Naive thymus-derived CD4-positive, alpha-beta T cell (primary cell): ENCODE measurements at regions of chr20 and their contacts with region 1.

Region 1: GRCh38 chr20:354298-355064 is 7.6 kb downstream of the NRSN2 start:
- DNase-seq: peak; percentile 64 to 86 (median 79)
- ATAC-seq: peak; percentile 100
- H3K4me3 ChIP-seq: no peak overlapping the region
- H3K4me3 Mint-ChIP-seq: no peak overlapping the region
- H3K27ac ChIP-seq: no peak overlapping the region
- H3K27ac Mint-ChIP-seq: no peak overlapping the region
- H3K4me1 ChIP-seq: peaks cover 0 to 3% of the 10 kb centered on the region in 2 donors
- H3K4me1 Mint-ChIP-seq: peaks cover 0 to 13% (median 5%) of the 10 kb centered on the region in 7 donors
- H3K27me3 ChIP-seq: no peaks in the 10 kb centered on the region
- H3K27me3 Mint-ChIP-seq: peaks cover 0 to 4% (median 0%) of the 10 kb centered on the region in 5 donors

Region 2: DNA sequence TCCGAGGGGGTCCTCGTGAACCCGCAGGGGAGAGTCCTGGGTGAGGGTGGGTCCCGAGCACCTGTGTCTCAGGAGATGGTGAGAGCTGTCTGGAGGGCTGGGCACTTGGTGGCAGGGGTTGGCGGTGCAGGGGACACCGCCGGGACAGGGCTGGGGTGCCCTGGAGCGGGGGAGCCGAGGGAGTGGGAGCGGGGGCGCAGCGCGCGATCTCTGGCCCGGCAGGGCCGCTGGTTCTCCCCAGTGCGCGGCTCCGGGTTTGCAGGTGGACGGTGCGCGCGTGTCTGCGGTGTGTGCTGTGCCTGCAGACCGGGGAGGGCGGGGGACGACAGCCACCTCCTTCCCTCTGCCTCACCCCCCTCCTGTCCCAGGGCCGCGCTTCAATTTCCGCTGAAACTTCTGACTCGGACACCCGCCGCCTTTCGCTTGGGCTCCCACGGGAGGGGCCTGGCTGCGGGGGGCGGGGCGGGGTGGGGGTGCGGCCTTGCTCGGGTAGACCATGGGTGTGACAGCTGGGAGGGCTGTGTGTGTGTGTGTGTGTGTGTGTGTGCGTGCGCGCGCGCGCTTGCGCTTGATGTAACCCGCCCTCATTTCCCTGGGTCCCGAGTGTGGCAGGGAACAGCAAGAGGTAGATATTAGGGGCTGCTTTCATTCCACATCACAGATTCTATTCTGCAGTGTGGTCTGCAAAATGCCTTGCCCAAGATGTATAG is 27.3 kb after region 1 on chr20:
- CTCF ChIA-PET with region 1: interaction called, 3 read pairs
- POLR2A ChIA-PET with region 1: no interaction called
- intact Hi-C with region 1: loop called in 1 of 2 experiments (anchors 2 kb)
- DNase-seq: peak; percentile 41 to 75 (median 64)
- ATAC-seq: peak; percentile 81
- H3K4me3 ChIP-seq: peak overlapping the region; percentile 64
- H3K4me3 Mint-ChIP-seq: peak overlapping the region; percentile 66 to 91 (median 84)
- H3K27ac ChIP-seq: peak overlapping the region; percentile 73
- H3K27ac Mint-ChIP-seq: peak overlapping the region; percentile 55 to 86 (median 78)
- H3K4me1 ChIP-seq: no peaks in the 10 kb centered on the region
- H3K4me1 Mint-ChIP-seq: peaks cover 4 to 34% (median 13%) of the 10 kb centered on the region in 7 donors
- H3K27me3 ChIP-seq: no peaks in the 10 kb centered on the region
- H3K27me3 Mint-ChIP-seq: peaks cover 0 to 3% (median 0%) of the 10 kb centered on the region in 5 donors

Region 3: GRCh38 chr20:420641-421574 is 66.4 kb after region 1 on chr20:
- CTCF ChIA-PET with region 1: no interaction called
- POLR2A ChIA-PET with region 1: no interaction called
- intact Hi-C with region 1: no loop called
- DNase-seq: no peak
- ATAC-seq: no peak
- H3K4me3 ChIP-seq: no peak overlapping the region
- H3K4me3 Mint-ChIP-seq: no peak overlapping the region
- H3K27ac ChIP-seq: no peak overlapping the region
- H3K27ac Mint-ChIP-seq: peak overlapping the region in 1 of 9 donors; percentile 85
- H3K4me1 ChIP-seq: no peaks in the 10 kb centered on the region
- H3K4me1 Mint-ChIP-seq: peaks cover 11 to 30% (median 16%) of the 10 kb centered on the region in 7 donors
- H3K27me3 ChIP-seq: no peaks in the 10 kb centered on the region
- H3K27me3 Mint-ChIP-seq: no peaks in the 10 kb centered on the region

Region 4: DNA sequence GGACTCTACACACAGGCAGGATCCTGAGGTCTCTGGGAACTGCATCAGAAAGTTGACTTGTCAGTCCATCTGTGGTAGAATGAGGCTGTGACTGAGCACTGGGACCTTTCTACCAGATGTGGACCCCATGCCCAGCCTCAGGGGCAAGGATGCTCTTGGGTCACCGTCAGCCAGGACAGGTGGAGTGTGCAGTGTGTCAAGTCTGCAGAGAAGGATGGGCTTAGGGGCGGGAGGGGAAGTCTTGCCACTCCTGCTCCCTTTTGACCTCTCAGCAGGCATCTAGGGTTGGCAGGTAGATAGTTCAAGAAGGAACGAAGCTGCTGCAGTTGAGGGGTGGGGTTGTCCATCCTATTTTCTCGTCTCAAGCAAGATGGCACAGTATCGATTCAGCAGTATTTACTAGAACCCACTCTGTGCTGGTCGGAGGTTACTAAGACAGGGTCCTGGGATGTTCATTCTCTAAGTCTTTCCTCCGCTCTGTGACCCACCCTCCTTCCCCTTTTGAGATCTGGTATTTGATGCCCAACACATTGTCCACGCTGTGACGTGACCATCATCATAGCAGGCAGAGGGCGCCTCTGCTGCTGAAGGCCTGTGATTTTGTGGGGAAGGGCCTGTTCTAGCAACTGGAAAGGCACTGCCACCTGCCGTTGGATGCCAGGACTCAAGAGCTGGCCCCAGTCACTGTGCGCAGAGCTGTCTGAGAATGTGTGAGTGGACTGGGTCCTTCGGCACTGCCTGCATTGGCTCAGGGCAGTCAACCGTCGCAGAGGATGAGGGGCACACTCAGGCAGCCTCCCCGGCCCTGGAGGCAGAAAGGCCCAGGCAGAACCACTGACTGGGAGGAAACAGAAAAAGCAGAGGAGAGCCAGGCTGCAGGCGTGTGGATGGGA is 76.8 kb after region 1 on chr20:
- CTCF ChIA-PET with region 1: interaction called, 15 read pairs
- POLR2A ChIA-PET with region 1: no interaction called
- intact Hi-C with region 1: loop called (anchors 1 kb)
- DNase-seq: peak in 7 of 9 donors; percentile 25 to 47 (median 29)
- ATAC-seq: peak; percentile 65
- H3K4me3 ChIP-seq: no peak overlapping the region
- H3K4me3 Mint-ChIP-seq: no peak overlapping the region
- H3K27ac ChIP-seq: no peak overlapping the region
- H3K27ac Mint-ChIP-seq: peak overlapping the region in 7 of 9 donors; percentile 17 to 88 (median 72)
- H3K4me1 ChIP-seq: peaks cover 17 to 21% of the 10 kb centered on the region in 2 donors
- H3K4me1 Mint-ChIP-seq: peaks cover 27 to 57% (median 45%) of the 10 kb centered on the region in 7 donors
- H3K27me3 ChIP-seq: no peaks in the 10 kb centered on the region
- H3K27me3 Mint-ChIP-seq: no peaks in the 10 kb centered on the region

Region 5: GRCh38 chr20:462199-462991 is 107.9 kb after region 1 on chr20 and contains the start of gene TBC1D20:
- CTCF ChIA-PET with region 1: interaction called, 3 read pairs
- POLR2A ChIA-PET with region 1: no interaction called
- intact Hi-C with region 1: loop called (anchors 1 to 5 kb)
- DNase-seq: peak; percentile 81 to 92 (median 89)
- ATAC-seq: peak; percentile 99
- H3K4me3 ChIP-seq: peak within 1 kb of the TSS; percentile 71
- H3K4me3 Mint-ChIP-seq: peak within 1 kb of the TSS; percentile 90 to 100 (median 97)
- H3K27ac ChIP-seq: peak within 1 kb of the TSS; percentile 85
- H3K27ac Mint-ChIP-seq: peak within 1 kb of the TSS; percentile 90 to 98 (median 95)
- H3K4me1 ChIP-seq: peaks cover 26 to 33% of the 10 kb centered on the region in 2 donors
- H3K4me1 Mint-ChIP-seq: peaks cover 31 to 55% (median 49%) of the 10 kb centered on the region in 7 donors
- H3K27me3 ChIP-seq: no peaks in the 10 kb centered on the region
- H3K27me3 Mint-ChIP-seq: peaks cover 0 to 2% (median 0%) of the 10 kb centered on the region in 5 donors
- total RNA-seq, gene TBC1D20: 26.3 to 45.7 (median 35.4) TPM

Region 6: DNA sequence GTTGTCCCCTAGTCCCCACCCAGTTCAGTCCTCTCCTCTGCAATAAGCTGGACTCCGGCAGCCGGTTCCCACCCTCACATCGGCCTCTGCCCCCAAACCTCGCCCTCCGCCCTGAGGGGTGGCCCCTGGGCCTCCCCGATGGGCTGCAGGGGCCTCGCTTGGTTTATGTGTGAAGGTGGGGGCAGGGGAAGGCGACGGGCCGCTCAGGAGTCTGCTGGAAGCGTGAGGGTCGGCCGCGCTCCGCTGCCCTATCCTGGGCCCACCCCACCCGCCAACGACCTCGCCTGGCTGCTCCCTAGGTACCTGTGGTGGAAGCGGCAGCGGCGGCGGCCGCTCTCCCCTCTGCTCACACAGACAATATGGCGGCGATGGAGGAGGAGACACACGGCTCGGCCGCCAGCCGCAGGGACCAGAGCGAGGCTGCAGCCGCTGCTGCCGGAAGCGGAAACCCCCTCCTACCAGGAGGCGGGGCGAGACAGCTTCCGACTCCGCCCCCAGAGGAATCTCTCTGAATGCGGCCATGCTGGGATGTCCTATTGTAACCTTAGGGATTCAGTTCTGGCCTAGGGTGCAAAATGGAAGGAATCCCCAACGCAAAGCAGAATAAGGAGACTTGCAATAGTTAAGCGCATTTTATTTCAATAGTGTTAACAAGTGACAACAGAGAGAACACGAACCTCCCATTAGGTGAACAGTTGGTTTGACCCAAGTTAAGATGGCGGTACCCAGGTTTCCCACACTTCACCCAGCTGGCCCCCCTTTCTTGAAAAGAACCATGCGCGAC is 189.1 kb after region 1 on chr20 and contains the start of gene CSNK2A1:
- CTCF ChIA-PET with region 1: no interaction called
- POLR2A ChIA-PET with region 1: no interaction called
- intact Hi-C with region 1: loop called (anchors 5 kb)
- DNase-seq: peak; percentile 93 to 99 (median 97)
- ATAC-seq: peak; percentile 97
- H3K4me3 ChIP-seq: peak within 1 kb of the TSS; percentile 59
- H3K4me3 Mint-ChIP-seq: peak within 1 kb of the TSS; percentile 86 to 100 (median 91)
- H3K27ac ChIP-seq: peak within 1 kb of the TSS; percentile 94
- H3K27ac Mint-ChIP-seq: peak within 1 kb of the TSS; percentile 97 to 100 (median 98)
- H3K4me1 ChIP-seq: peaks cover 17 to 39% of the 10 kb centered on the region in 2 donors
- H3K4me1 Mint-ChIP-seq: peaks cover 40 to 58% (median 54%) of the 10 kb centered on the region in 7 donors
- H3K27me3 ChIP-seq: no peaks in the 10 kb centered on the region
- H3K27me3 Mint-ChIP-seq: peaks cover 0 to 9% (median 5%) of the 10 kb centered on the region in 5 donors
- total RNA-seq, gene CSNK2A1: 69.7 to 117 (median 90.8) TPM

Region 7: DNA sequence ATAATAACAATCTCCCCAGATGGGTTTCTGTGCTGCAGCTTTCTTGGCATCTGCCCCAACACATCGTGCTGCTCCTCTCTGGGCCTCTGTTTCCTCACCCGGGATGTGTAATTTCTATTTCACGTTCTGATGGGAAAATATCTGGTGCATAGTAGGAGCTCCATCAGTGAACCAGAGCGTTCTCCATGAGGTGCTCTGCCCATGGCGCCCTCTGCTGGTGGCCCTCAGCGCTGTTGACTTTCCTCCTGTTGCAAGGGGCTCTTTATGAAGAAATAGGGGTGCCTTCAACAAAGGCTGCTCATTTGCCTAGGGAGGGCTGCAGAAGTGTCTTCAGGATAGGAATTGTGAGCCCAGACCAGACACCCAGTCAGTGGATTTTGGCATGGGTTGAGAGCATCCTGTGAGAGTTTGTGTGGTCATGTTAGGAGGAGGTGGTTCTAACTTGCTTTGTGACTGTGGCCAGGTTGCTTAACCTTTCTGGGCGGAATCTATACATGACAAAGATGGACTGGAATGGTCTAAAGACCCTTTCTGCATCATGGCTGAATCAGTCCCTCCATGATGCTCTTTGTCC is 313.0 kb after region 1 on chr20:
- CTCF ChIA-PET with region 1: no interaction called
- POLR2A ChIA-PET with region 1: no interaction called
- intact Hi-C with region 1: loop called in 1 of 2 experiments (anchors 5 kb)
- DNase-seq: peak in 2 of 9 donors; percentile 21 to 69
- ATAC-seq: peak; percentile 55
- H3K4me3 ChIP-seq: no peak overlapping the region
- H3K4me3 Mint-ChIP-seq: no peak overlapping the region
- H3K27ac ChIP-seq: no peak overlapping the region
- H3K27ac Mint-ChIP-seq: no peak overlapping the region
- H3K4me1 ChIP-seq: no peaks in the 10 kb centered on the region
- H3K4me1 Mint-ChIP-seq: peaks cover 0 to 13% (median 0%) of the 10 kb centered on the region in 7 donors
- H3K27me3 ChIP-seq: peaks cover 0 to 6% of the 10 kb centered on the region in 2 donors
- H3K27me3 Mint-ChIP-seq: peaks cover 60 to 73% (median 65%) of the 10 kb centered on the region in 5 donors